IMR-90 (cell line): ENCODE measurements at regions of chr3 and their contacts with region 1.

Region 1: DNA sequence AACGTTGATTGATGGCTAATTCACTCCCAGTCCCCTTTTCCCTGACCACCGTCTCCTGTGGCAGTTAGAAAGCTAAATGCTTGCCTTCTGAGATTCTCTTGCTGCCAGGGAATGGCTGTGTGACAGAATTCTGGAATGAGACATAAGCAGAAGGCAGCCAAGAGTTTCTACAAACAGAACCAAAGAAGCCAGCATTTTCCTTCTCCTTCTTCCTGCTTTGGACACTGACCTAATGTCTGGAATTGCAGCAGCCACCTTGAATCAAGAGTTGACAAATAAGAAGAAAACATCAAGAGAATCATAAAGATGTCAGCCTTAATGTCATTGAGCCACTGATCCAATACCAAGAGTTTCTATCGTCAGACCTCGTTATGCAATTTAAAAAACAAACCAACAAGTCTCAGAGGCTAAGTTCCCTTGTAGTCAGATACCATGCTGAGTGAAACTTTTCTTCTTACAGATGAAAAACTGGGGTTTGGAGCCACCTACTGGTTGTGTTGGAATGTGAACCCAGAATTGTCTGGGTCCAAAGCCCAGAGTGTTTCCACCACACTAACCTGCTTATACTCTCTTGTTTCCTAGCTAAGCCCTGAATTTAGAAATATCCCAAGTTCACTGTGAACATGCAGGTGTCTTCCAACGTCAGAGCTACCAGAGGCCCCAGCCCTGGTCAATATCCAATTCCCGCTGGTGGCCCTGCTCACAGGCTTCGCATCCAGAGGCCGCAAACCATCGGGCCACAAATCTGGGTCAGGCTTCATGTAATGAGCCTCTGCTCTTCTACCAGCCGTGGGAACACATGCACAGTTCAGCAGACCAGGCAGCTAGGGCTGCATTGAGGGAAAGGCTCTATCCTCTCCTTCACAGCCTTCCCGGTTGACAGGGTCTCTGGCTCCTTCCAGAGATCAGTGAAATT is 42.5 kb downstream of the MCF2L2 start:
- DNase-seq: peak; percentile 71
- ATAC-seq: peak; percentile 88
- H3K4me3 ChIP-seq: no peak overlapping the region
- H3K27ac ChIP-seq: no peak overlapping the region
- H3K4me1 ChIP-seq: no peaks in the 10 kb centered on the region
- H3K27me3 ChIP-seq: peaks cover 17% of the 10 kb centered on the region
- CTCF ChIP-seq: peak; percentile 77
- POLR2A ChIP-seq: no peak
- RAD21 ChIP-seq: peak; percentile 83

Region 2: DNA sequence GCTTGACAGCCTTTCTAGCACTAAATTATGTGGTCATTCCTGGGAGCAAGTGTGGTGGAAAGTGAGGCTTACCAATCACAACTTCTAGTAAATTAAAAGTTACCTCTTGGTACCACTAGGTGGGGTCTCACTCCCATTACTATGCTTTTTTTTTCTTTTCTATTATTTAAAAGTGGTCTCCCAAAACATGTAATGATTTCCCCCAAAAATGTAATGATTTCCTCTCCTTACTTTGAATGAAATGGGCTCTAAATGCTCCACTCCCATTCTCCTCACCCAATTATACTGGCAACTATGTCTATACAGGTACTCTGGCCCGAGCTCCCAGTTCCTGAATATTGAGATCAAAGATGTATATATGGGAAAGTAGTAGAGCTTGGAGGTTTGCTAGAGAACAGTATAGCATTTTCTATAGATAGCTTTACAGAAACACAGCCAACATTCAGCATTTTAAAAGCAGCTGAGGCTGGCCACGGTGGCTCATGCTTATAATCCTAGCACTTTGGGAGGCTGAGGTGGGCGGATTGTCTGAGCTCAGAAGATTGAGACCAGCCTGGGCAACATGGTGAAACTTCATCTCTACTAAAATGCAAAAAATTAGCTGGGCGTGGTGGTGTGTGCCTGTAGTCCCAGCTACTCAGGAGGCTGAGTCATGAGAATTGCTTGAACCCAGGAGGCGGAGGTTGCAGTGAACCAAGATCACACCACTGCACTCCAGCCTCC is 476.5 kb before region 1 on chr3:
- CTCF ChIA-PET with region 1: no interaction called
- POLR2A ChIA-PET with region 1: no interaction called
- dilution Hi-C with region 1: no loop called
- in situ Hi-C with region 1: loop called (anchors 25 kb)
- intact Hi-C with region 1: loop called (anchors 5 kb)
- DNase-seq: no peak
- ATAC-seq: peak; percentile 48; the same call in 1 of the 2 replicates
- H3K4me3 ChIP-seq: no peak overlapping the region
- H3K27ac ChIP-seq: no peak overlapping the region
- H3K4me1 ChIP-seq: peaks cover 14% of the 10 kb centered on the region
- H3K27me3 ChIP-seq: no peaks in the 10 kb centered on the region
- CTCF ChIP-seq: peak; percentile 56
- POLR2A ChIP-seq: no peak
- RAD21 ChIP-seq: peak; percentile 47

Region 3: DNA sequence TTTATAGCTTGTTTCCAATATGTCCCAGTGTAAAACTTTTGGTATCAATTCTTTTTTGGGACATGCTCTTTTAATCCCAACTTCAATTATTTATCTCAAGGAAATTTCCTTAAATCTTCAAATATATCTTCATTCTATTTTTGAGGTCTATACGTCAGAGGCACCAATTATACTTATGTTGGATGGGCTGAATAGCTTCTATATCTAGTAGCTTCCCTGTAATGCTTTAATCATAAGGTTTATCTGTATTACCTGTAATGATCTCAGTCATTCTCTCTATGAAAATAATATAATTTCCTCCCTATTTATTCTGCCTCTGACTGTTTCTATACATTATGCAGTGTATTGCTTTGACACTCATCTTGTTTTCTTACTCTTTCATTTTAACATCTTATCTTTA is 256.7 kb before region 1 on chr3:
- CTCF ChIA-PET with region 1: interaction called, 18 read pairs
- POLR2A ChIA-PET with region 1: no interaction called
- dilution Hi-C with region 1: no loop called
- in situ Hi-C with region 1: loop called (anchors 5 kb)
- intact Hi-C with region 1: no loop called
- DNase-seq: no peak
- ATAC-seq: no peak
- H3K4me3 ChIP-seq: no peak overlapping the region
- H3K27ac ChIP-seq: no peak overlapping the region
- H3K4me1 ChIP-seq: peaks cover 5% of the 10 kb centered on the region
- H3K27me3 ChIP-seq: peaks cover 3% of the 10 kb centered on the region; the same call in 1 of the 2 replicates
- CTCF ChIP-seq: no peak
- POLR2A ChIP-seq: no peak
- RAD21 ChIP-seq: no peak

Region 4: GRCh38 chr3:183188895-183189462 is 197.0 kb before region 1 on chr3:
- CTCF ChIA-PET with region 1: interaction called, 62 read pairs
- POLR2A ChIA-PET with region 1: interaction called, 3 read pairs
- dilution Hi-C with region 1: no loop called
- in situ Hi-C with region 1: loop called (anchors 5 kb)
- intact Hi-C with region 1: loop called (anchors 1 kb)
- DNase-seq: no peak
- ATAC-seq: no peak
- H3K4me3 ChIP-seq: no peak overlapping the region
- H3K27ac ChIP-seq: no peak overlapping the region
- H3K4me1 ChIP-seq: peaks cover 10% of the 10 kb centered on the region
- H3K27me3 ChIP-seq: no peaks in the 10 kb centered on the region; the same call in 1 of the 2 replicates
- CTCF ChIP-seq: peak; percentile 35
- POLR2A ChIP-seq: no peak
- RAD21 ChIP-seq: no peak

Region 5: DNA sequence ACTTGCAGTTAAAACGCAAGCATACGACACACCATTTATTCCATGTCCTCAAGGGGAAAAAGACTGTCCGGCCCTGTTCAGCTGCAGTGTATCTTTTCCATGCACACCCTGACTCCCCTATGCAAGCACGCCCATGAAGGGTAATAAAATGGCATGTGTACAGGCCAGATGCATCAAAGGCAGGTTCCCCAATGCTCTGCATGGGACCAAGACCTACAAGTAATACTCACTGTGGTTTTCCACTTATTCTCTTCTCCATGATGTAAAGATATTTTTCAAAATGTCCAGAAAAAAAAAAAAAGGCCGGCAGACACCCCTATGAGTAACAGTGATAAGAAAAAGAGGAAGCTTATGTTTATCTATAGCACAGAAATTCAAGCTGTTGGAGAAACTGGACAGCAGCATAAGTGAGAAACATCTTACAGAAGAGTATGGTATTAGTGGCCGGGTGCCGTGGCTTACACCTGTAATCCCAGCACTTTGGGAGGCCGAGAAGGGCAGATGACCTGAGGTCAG is 28.3 kb before region 1 on chr3:
- CTCF ChIA-PET with region 1: interaction called, 3 read pairs
- POLR2A ChIA-PET with region 1: interaction called, 11 read pairs
- dilution Hi-C with region 1: no loop called
- in situ Hi-C with region 1: no loop called
- intact Hi-C with region 1: no loop called
- DNase-seq: no peak
- ATAC-seq: no peak
- H3K4me3 ChIP-seq: no peak overlapping the region
- H3K27ac ChIP-seq: no peak overlapping the region
- H3K4me1 ChIP-seq: no peaks in the 10 kb centered on the region
- H3K27me3 ChIP-seq: peaks cover 12% of the 10 kb centered on the region
- CTCF ChIP-seq: no peak
- POLR2A ChIP-seq: no peak
- RAD21 ChIP-seq: no peak